ENCODE measurements at regions of chr12 and their contacts with region 1.

Region 1: DNA sequence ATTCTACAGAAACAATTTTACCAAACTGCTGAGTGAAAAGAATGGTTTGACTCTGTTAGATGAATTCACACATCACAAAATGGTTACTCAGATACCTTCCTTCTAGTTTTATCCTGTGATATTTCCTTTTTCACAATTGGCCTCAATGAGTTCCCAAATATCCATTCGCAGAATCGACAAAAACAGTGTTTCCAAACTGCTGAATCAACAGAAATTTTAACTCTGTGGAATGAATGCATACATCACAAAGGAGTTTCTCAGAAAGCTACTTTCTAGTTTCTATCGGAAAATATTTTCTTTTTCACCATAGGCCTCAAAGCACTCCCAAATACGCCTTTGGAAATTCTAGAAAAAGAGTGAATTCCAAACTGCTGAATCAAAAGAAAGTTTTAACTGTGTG is 525.0 kb downstream of the ALG10 start:
- DNase-seq: no peak
- ATAC-seq: no peak
- H3K4me3 ChIP-seq: no peak overlapping the region
- H3K4me3 Mint-ChIP-seq: no peak overlapping the region
- H3K27ac ChIP-seq: no peak overlapping the region
- H3K27ac Mint-ChIP-seq: no peak overlapping the region
- H3K4me1 ChIP-seq: no peaks in the 10 kb centered on the region
- H3K4me1 Mint-ChIP-seq: no peaks in the 10 kb centered on the region
- H3K27me3 ChIP-seq: no peaks in the 10 kb centered on the region
- H3K27me3 Mint-ChIP-seq: no peaks in the 10 kb centered on the region
- CTCF ChIP-seq: no peak

Region 2: GRCh38 chr12:33349791-33350190 is 1197.5 kb before region 1 on chr12:
- CTCF ChIA-PET with region 1: no interaction called
- POLR2A ChIA-PET with region 1: no interaction called
- intact Hi-C with region 1: loop called in 1 of 2 experiments (anchors 10 kb)
- DNase-seq: no peak
- ATAC-seq: no peak
- H3K4me3 ChIP-seq: no peak overlapping the region
- H3K4me3 Mint-ChIP-seq: no peak overlapping the region
- H3K27ac ChIP-seq: no peak overlapping the region
- H3K27ac Mint-ChIP-seq: no peak overlapping the region
- H3K4me1 ChIP-seq: no peaks in the 10 kb centered on the region
- H3K4me1 Mint-ChIP-seq: no peaks in the 10 kb centered on the region
- H3K27me3 ChIP-seq: no peaks in the 10 kb centered on the region
- H3K27me3 Mint-ChIP-seq: no peaks in the 10 kb centered on the region
- CTCF ChIP-seq: no peak

Region 3: GRCh38 chr12:34595749-34596733 is 48.8 kb after region 1 on chr12:
- CTCF ChIA-PET with region 1: no interaction called
- POLR2A ChIA-PET with region 1: no interaction called
- intact Hi-C with region 1: no loop called
- DNase-seq: no peak
- ATAC-seq: no peak
- H3K4me3 ChIP-seq: no peak overlapping the region
- H3K4me3 Mint-ChIP-seq: no peak overlapping the region
- H3K27ac ChIP-seq: no peak overlapping the region
- H3K27ac Mint-ChIP-seq: no peak overlapping the region
- H3K4me1 ChIP-seq: no peaks in the 10 kb centered on the region
- H3K4me1 Mint-ChIP-seq: no peaks in the 10 kb centered on the region
- H3K27me3 ChIP-seq: no peaks in the 10 kb centered on the region
- H3K27me3 Mint-ChIP-seq: no peaks in the 10 kb centered on the region
- CTCF ChIP-seq: no peak